Right ventricle myocardium superior (tissue), 1 donor: ENCODE measurements at regions of chr7 and their contacts with region 1.

Region 1: DNA sequence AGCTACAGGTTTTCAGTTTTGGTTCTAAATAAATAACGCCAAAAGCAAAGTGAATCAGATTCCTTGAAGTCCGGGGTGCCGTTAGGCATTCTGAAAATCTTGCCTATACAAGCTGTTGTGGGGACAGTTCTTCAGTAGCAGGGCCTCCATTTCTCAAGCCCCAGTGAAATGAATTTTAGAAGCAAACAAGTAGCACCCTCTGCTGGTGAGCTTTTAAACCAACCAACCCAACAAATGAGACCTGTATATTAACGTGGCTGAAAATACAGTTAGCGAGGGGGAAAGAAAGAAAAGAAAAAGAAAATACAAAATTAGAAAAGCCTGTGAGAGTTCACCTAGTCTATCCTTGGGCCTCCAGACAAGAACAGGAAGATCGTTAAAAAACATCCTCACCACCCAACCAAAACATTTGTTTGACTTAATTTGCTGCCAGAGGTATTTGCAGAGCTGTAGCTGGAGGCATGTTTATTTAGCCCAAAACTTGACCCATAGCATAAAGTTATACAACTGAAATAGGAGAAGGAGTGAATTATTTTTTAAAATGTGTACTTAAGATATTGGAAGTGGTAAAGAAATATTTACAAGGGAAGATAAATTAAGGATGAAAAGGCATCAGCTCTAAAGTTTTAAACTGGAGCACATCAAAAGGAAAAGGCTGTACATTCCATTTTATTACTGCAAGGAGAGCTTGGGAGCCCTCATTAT is 98.9 kb downstream of the DYNC1I1 start:
- DNase-seq: no peak
- ATAC-seq: peak; percentile 84

Region 2: GRCh38 chr7:95511716-95512260 is 359.4 kb before region 1 on chr7:
- intact Hi-C with region 1: loop called (anchors 10 kb)
- DNase-seq: peak; percentile 53
- ATAC-seq: peak; percentile 95

Region 3: GRCh38 chr7:95723592-95724180 is 147.5 kb before region 1 on chr7:
- intact Hi-C with region 1: loop called (anchors 2 kb)
- DNase-seq: no peak
- ATAC-seq: peak; percentile 90